ENCODE measurements at regions of chr20 and their contacts with region 1.

Region 1: DNA sequence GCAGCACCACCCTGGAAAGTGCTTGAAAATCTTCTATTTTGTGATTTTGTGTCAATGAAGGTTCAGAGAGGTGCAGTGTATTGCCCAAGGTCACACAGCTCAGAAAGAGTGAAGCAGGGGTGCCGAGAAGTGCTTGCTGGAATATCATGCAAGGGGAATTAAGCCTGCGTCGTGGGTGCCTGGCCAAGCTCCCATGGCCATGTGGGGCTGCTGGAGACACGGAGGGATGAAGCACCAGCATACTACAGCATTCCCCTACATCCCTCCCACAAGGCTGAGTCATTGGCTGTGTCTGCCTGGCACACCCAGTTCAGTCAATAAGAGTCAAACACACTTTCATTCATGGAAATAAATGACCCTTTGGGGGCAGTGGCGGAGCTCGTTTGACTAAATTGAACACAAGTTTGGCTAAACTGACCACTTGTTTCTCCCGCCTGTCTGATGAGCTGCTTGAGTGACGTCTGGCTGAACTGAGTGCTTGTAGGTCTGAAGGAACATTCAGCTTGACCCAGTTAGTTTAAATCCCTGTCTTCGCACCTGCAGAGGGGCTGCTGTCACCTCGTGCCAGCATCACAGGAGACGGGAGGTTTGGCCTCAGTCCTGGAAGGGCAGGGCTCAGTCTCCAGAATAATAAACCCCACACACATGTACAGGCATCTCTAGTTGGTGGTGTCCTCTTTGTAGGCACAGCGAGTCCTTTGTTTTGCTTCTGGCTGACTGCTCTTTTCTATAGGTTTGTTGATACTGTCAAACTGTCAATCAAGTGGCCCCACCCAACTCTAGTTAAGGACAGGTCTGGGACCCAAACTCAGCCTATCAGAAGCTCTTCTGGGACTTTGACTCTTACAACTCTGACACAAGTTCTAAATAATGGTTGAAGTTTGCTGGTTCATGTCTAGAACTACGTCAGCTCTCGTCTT is 8.4 kb upstream of the TGM2 start:
- DNase-seq: peak; percentile 98
- ATAC-seq: peak; percentile 96
- H3K4me3 ChIP-seq: no peak overlapping the region
- H3K27ac ChIP-seq: peak overlapping the region; percentile 89
- H3K4me1 ChIP-seq: peaks cover 54% of the 10 kb centered on the region
- H3K27me3 ChIP-seq: no peaks in the 10 kb centered on the region
- CTCF ChIP-seq: peak; percentile 55

Region 2: DNA sequence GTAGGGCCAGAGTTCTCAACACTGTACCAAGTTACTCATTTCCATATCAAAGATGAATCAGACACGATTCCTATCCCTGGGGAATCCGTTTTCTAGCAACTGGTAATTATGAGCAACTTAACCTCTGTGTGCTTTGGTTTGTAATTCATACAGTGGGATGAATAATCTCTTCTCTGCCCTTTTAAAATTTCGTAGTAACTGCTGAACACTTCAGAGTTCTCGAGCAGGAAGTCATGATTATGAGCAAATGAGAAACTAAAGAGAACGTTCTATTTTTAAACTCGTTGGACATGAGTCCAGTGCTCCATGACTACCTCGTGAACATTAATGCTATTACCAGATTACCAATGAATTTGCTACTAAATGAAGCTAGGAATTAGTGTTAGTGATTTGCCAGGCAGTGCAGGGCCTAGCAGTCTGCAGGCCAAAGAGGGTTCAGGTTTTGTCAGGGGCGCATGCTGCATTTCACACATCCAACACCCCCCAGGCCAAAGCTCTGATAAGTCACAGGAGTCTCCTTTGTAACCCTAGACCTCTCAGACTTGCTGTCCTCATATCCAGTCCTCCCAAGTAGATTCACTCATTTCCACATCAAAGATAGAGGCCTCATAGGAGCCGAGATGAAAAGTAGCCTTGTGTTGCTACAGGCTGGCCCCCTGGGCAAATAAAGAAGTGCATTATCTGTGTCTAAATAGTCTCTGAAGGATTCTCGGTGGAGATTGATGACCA is 316.4 kb before region 1 on chr20:
- CTCF ChIA-PET with region 1: no interaction called
- POLR2A ChIA-PET with region 1: no interaction called
- intact Hi-C with region 1: no loop called
- DNase-seq: peak; percentile 43
- ATAC-seq: peak; percentile 61
- H3K4me3 ChIP-seq: no peak overlapping the region
- H3K27ac ChIP-seq: peak overlapping the region; percentile 52
- H3K4me1 ChIP-seq: no peaks in the 10 kb centered on the region
- H3K27me3 ChIP-seq: no peaks in the 10 kb centered on the region
- CTCF ChIP-seq: no peak

Region 3: GRCh38 chr20:38221119-38221589 is 47.7 kb after region 1 on chr20:
- CTCF ChIA-PET with region 1: interaction called, 26 read pairs
- POLR2A ChIA-PET with region 1: no interaction called
- intact Hi-C with region 1: loop called (anchors 2 kb)
- DNase-seq: peak; percentile 92
- ATAC-seq: peak; percentile 72
- H3K4me3 ChIP-seq: peak overlapping the region; percentile 14; the same call in 1 of the 2 replicates
- H3K27ac ChIP-seq: peak overlapping the region; percentile 18; the same call in 1 of the 2 replicates
- H3K4me1 ChIP-seq: peaks cover 36% of the 10 kb centered on the region
- H3K27me3 ChIP-seq: no peaks in the 10 kb centered on the region
- CTCF ChIP-seq: peak; percentile 97

Region 4: GRCh38 chr20:38304845-38305447 is 131.4 kb after region 1 on chr20:
- CTCF ChIA-PET with region 1: no interaction called
- POLR2A ChIA-PET with region 1: no interaction called
- intact Hi-C with region 1: no loop called
- DNase-seq: peak; percentile 64
- ATAC-seq: peak; percentile 64
- H3K4me3 ChIP-seq: no peak overlapping the region
- H3K27ac ChIP-seq: no peak overlapping the region
- H3K4me1 ChIP-seq: peaks cover 7% of the 10 kb centered on the region
- H3K27me3 ChIP-seq: no peaks in the 10 kb centered on the region
- CTCF ChIP-seq: peak; percentile 79

Measured in PC-3 (cell line).